Activated CD8-positive, alpha-beta T cell treated with anti-CD3 and anti-CD28 coated beads, Interleukin-2, amount 10 ng/mL, durations not matched to agents 7 days and 5 days (primary cell): ENCODE measurements at regions of chr5 and their contacts with region 1.

Region 1: GRCh38 chr5:95846554-95847260 is 24.2 kb upstream of the GLRX start:
- DNase-seq: peak; percentile 77
- ATAC-seq: peak; percentile 57
- H3K4me3 Mint-ChIP-seq: no peak overlapping the region
- H3K27ac Mint-ChIP-seq: no peak overlapping the region
- H3K4me1 Mint-ChIP-seq: peaks cover 36% of the 10 kb centered on the region
- H3K27me3 Mint-ChIP-seq: peaks cover 21% of the 10 kb centered on the region

Region 2: DNA sequence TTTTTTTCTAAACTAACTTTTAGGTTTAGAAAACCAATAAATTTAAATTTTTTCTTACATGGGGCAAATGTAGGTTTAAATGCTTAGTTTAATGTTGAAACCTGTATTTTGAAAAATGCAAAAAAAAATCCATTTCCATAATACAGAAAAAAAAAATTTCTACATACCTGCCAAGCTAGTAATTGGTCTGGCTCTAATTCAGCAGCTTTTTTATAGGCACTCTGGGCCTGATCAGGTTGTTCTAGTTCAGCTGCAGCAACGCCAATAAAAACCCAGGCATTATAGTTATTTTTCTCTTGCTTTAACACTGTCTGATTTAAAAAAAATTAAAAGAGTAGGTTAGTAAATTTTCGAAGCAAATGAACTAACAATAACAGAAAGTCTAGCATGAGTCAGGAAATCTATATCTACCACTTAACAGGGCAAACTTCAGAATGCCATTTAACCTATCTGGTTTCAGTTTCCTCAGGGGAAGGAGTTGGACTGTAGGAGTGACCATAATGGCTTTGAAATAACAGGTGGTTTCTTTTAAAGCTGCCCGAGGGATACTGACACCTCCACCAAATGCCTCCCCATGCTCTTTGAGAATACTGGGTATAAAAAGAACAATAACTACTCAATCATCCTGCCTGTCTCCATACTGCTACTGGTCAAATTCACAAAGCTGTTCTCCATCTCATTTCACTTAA is 303.5 kb before region 1 on chr5:
- CTCF ChIA-PET with region 1: no interaction called
- POLR2A ChIA-PET with region 1: no interaction called
- DNase-seq: no peak
- ATAC-seq: no peak
- H3K4me3 Mint-ChIP-seq: no peak overlapping the region
- H3K27ac Mint-ChIP-seq: no peak overlapping the region
- H3K4me1 Mint-ChIP-seq: peaks cover 7% of the 10 kb centered on the region
- H3K27me3 Mint-ChIP-seq: no peaks in the 10 kb centered on the region

Region 3: DNA sequence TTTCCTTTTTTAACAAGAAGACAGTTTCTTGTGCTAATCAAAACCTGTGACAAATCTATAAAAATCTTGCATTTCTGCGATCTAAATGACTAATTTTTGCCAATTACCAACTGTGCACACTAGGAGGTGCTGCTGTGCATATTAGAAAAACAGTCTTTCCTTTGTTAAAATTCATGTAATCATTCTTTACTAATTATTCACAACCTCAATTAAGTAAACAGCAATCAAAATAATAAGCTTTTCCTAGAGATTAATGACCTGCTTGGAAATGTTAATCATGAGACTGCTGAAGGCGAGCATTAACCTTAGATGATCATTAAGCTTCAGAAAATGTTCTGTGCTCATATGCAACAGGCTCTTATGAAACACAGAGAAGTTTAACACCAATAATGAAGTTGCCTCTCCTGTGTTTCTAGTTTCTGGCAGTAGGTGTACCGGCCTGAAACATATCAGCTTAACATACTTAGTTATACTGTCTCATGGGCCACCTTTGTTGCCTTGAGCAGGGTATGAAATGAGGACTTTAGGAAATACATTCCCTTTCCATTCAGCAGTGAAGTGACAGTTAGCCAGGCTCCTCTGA is 182.4 kb before region 1 on chr5:
- CTCF ChIA-PET with region 1: interaction called, 42 read pairs
- POLR2A ChIA-PET with region 1: no interaction called
- DNase-seq: peak; percentile 59
- ATAC-seq: no peak
- H3K4me3 Mint-ChIP-seq: no peak overlapping the region
- H3K27ac Mint-ChIP-seq: no peak overlapping the region
- H3K4me1 Mint-ChIP-seq: no peaks in the 10 kb centered on the region
- H3K27me3 Mint-ChIP-seq: peaks cover 7% of the 10 kb centered on the region

Region 4: DNA sequence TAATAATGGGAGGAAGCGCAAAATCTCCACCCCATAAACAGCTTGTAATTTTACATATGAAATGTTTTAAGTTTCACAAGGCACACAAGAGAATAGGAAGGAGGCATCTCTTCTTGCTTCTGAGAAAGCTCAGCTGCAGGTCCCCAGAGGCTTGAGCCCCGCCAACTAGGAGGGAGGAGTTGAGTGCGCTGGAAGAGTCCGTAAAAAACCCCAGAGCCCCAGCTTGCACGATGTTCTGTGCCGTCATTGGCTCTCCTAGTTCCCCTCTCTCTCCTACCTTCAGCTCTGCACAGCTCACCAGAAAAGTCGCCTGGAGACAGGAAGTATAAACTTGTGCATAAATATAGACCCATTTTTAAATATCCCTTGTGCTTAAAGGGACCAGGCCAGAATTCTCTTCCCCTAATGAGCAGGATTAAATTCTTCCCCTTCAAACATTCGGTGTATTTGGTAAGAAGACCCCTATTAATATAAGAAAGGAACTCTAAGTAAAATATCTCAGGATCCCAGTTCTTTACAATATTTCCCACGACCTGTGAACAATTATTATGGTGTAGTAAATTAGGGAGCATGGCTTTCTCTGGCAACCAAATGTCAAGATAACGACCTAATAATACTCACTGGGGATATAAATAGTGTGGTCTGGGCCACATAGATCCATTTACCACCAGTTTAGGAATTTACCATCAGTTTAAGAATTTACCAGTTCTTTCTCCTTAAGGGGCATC is 37.9 kb before region 1 on chr5:
- CTCF ChIA-PET with region 1: interaction called, 14 read pairs
- POLR2A ChIA-PET with region 1: no interaction called
- DNase-seq: peak; percentile 92
- ATAC-seq: peak; percentile 100
- H3K4me3 Mint-ChIP-seq: peak overlapping the region; percentile 58
- H3K27ac Mint-ChIP-seq: peak overlapping the region; percentile 85
- H3K4me1 Mint-ChIP-seq: peaks cover 62% of the 10 kb centered on the region
- H3K27me3 Mint-ChIP-seq: no peaks in the 10 kb centered on the region

Region 5: GRCh38 chr5:95822542-95823181 is 24.0 kb before region 1 on chr5 and contains the start of gene GLRX:
- CTCF ChIA-PET with region 1: interaction called, 18 read pairs
- POLR2A ChIA-PET with region 1: no interaction called
- DNase-seq: peak; percentile 77
- ATAC-seq: peak; percentile 54
- H3K4me3 Mint-ChIP-seq: peak within 1 kb of the TSS; percentile 97
- H3K27ac Mint-ChIP-seq: peak within 1 kb of the TSS; percentile 88
- H3K4me1 Mint-ChIP-seq: peaks cover 71% of the 10 kb centered on the region
- H3K27me3 Mint-ChIP-seq: no peaks in the 10 kb centered on the region
- total RNA-seq, gene GLRX: 65.4 to 67.4 TPM

Region 6: DNA sequence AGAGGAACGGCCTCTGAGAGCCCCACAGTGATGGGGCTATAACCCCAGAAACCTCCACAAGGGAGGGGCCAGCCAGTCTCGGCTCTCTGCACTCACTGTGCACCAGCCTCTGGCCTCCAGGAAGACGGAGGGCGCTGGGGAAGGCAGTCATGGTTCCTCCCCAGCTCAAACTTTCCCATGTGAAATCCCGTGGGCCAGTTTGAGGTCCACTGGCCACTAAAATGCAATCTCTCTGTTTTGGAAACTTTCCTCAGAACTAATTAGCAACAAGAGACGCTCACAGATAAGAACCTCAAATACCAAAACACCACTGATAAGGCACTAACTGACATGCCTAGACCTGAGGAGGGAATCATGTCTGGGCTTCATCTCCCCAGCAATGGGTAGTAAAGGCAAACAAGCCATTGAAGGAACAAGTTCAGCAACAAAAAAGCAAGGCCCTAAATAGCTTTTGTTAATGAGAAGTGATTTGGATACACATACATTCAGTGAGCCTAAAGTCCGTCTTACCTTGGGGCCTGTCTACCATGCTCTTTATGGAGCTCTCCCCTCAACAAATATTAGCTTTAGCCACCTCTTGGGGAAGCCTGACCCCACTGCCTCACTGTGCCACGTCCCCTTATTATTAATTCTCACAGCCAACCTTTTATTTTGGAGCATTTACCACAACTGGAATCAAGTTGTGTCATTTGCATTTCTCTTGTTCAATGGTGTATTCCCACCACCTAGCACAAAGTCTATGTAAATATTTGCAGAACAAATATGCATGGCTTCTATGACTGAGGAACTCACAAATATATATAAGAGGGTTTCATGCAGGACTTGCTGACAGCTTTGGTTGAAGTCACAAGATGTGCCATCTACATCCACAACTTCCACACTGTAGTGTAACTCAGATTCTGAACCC is 32.0 kb after region 1 on chr5:
- CTCF ChIA-PET with region 1: no interaction called
- POLR2A ChIA-PET with region 1: no interaction called
- DNase-seq: no peak
- ATAC-seq: no peak
- H3K4me3 Mint-ChIP-seq: no peak overlapping the region
- H3K27ac Mint-ChIP-seq: no peak overlapping the region
- H3K4me1 Mint-ChIP-seq: no peaks in the 10 kb centered on the region
- H3K27me3 Mint-ChIP-seq: no peaks in the 10 kb centered on the region

Region 7: GRCh38 chr5:96336351-96336985 is 489.8 kb after region 1 on chr5:
- CTCF ChIA-PET with region 1: interaction called, 23 read pairs
- POLR2A ChIA-PET with region 1: no interaction called
- DNase-seq: peak; percentile 73
- ATAC-seq: peak; percentile 84
- H3K4me3 Mint-ChIP-seq: no peak overlapping the region
- H3K27ac Mint-ChIP-seq: no peak overlapping the region
- H3K4me1 Mint-ChIP-seq: no peaks in the 10 kb centered on the region
- H3K27me3 Mint-ChIP-seq: peaks cover 17% of the 10 kb centered on the region